ENCODE measurements at regions of chr7 and their contacts with region 1.

Region 1: GRCh38 chr7:30134611-30135545 is at the start of gene MTURN:
- DNase-seq: peak; percentile 92
- ATAC-seq: peak; percentile 83
- H3K4me3 ChIP-seq: peak within 1 kb of the TSS; percentile 63 to 95 (median 83)
- H3K4me3 Mint-ChIP-seq: peak within 1 kb of the TSS; percentile 98
- H3K27ac ChIP-seq: peak within 1 kb of the TSS in 1 of 2 donors; percentile 39
- H3K27ac Mint-ChIP-seq: peak within 1 kb of the TSS; percentile 93
- H3K4me1 ChIP-seq: peaks cover 0 to 18% of the 10 kb centered on the region in 2 donors
- H3K4me1 Mint-ChIP-seq: peaks cover 18% of the 10 kb centered on the region
- H3K27me3 ChIP-seq: peaks cover 0 to 3% (median 1%) of the 10 kb centered on the region in 4 experiments
- H3K27me3 Mint-ChIP-seq: peaks cover 11% of the 10 kb centered on the region
- CTCF ChIP-seq: no peak
- total RNA-seq, gene MTURN: 13.9 and 16.5 TPM in 2 replicates

Region 2: GRCh38 chr7:29494350-29494749 is 640.5 kb before region 1 on chr7:
- CTCF ChIA-PET with region 1: no interaction called
- POLR2A ChIA-PET with region 1: no interaction called
- intact Hi-C with region 1: no loop called
- DNase-seq: no peak
- ATAC-seq: no peak
- H3K4me3 ChIP-seq: no peak overlapping the region
- H3K4me3 Mint-ChIP-seq: no peak overlapping the region
- H3K27ac ChIP-seq: no peak overlapping the region
- H3K27ac Mint-ChIP-seq: no peak overlapping the region
- H3K4me1 ChIP-seq: no peaks in the 10 kb centered on the region
- H3K4me1 Mint-ChIP-seq: no peaks in the 10 kb centered on the region
- H3K27me3 ChIP-seq: no peaks in the 10 kb centered on the region
- H3K27me3 Mint-ChIP-seq: no peaks in the 10 kb centered on the region
- CTCF ChIP-seq: no peak

Region 3: GRCh38 chr7:30032310-30033130 is 102.4 kb before region 1 on chr7:
- CTCF ChIA-PET with region 1: no interaction called
- POLR2A ChIA-PET with region 1: no interaction called
- intact Hi-C with region 1: no loop called
- DNase-seq: no peak
- ATAC-seq: no peak
- H3K4me3 ChIP-seq: no peak overlapping the region
- H3K4me3 Mint-ChIP-seq: no peak overlapping the region
- H3K27ac ChIP-seq: no peak overlapping the region
- H3K27ac Mint-ChIP-seq: no peak overlapping the region
- H3K4me1 ChIP-seq: peaks cover 10 to 15% of the 10 kb centered on the region in 2 donors
- H3K4me1 Mint-ChIP-seq: peaks cover 6% of the 10 kb centered on the region
- H3K27me3 ChIP-seq: no peaks in the 10 kb centered on the region
- H3K27me3 Mint-ChIP-seq: no peaks in the 10 kb centered on the region
- CTCF ChIP-seq: no peak

Region 4: DNA sequence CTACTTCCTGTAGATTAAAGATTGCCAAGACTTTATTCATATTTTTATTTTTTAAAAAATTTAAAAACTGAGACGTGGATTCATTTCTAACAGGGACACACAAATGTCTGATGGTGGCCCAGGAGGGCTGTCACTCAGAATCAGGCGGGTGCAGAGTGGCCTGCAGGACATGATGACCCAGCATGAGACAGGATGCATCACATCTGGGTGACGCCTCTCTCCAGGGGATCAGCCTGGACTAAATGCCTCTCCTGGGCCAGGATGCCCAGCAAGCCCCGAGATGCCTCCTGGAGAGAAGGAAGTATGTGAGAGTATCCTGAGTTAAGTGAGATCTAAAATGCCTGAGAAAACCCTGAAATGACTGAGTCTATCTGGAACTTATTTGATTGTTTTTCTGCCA is 17.0 kb before region 1 on chr7:
- CTCF ChIA-PET with region 1: no interaction called
- POLR2A ChIA-PET with region 1: interaction called, 10 read pairs
- intact Hi-C with region 1: no loop called
- DNase-seq: no peak
- ATAC-seq: no peak
- H3K4me3 ChIP-seq: no peak overlapping the region
- H3K4me3 Mint-ChIP-seq: no peak overlapping the region
- H3K27ac ChIP-seq: no peak overlapping the region
- H3K27ac Mint-ChIP-seq: no peak overlapping the region
- H3K4me1 ChIP-seq: peaks cover 11 to 15% of the 10 kb centered on the region in 2 donors
- H3K4me1 Mint-ChIP-seq: peaks cover 18% of the 10 kb centered on the region
- H3K27me3 ChIP-seq: no peaks in the 10 kb centered on the region
- H3K27me3 Mint-ChIP-seq: no peaks in the 10 kb centered on the region
- CTCF ChIP-seq: no peak

Region 5: GRCh38 chr7:30178748-30179436 is 44.0 kb after region 1 on chr7:
- CTCF ChIA-PET with region 1: interaction called, 3 read pairs
- POLR2A ChIA-PET with region 1: no interaction called
- intact Hi-C with region 1: loop called (anchors 5 kb)
- DNase-seq: peak; percentile 72
- ATAC-seq: peak; percentile 90
- H3K4me3 ChIP-seq: peak overlapping the region in 3 of 5 experiments; percentile 9 to 37 (median 36)
- H3K4me3 Mint-ChIP-seq: peak overlapping the region; percentile 81
- H3K27ac ChIP-seq: peak overlapping the region; percentile 64 to 70
- H3K27ac Mint-ChIP-seq: peak overlapping the region; percentile 92
- H3K4me1 ChIP-seq: peaks cover 28 to 37% of the 10 kb centered on the region in 2 donors
- H3K4me1 Mint-ChIP-seq: peaks cover 44% of the 10 kb centered on the region
- H3K27me3 ChIP-seq: no peaks in the 10 kb centered on the region
- H3K27me3 Mint-ChIP-seq: no peaks in the 10 kb centered on the region
- CTCF ChIP-seq: no peak

Region 6: GRCh38 chr7:30284298-30285066 is 149.6 kb after region 1 on chr7 and contains the start of gene ZNRF2:
- CTCF ChIA-PET with region 1: no interaction called
- POLR2A ChIA-PET with region 1: no interaction called
- intact Hi-C with region 1: loop called (anchors 1 kb)
- DNase-seq: peak; percentile 99
- ATAC-seq: peak; percentile 80
- H3K4me3 ChIP-seq: peak within 1 kb of the TSS; percentile 46 to 91 (median 80)
- H3K4me3 Mint-ChIP-seq: peak within 1 kb of the TSS; percentile 88
- H3K27ac ChIP-seq: peak within 1 kb of the TSS; percentile 84 to 90
- H3K27ac Mint-ChIP-seq: peak within 1 kb of the TSS; percentile 96
- H3K4me1 ChIP-seq: peaks cover 19 to 30% of the 10 kb centered on the region in 2 donors
- H3K4me1 Mint-ChIP-seq: peaks cover 44% of the 10 kb centered on the region
- H3K27me3 ChIP-seq: no peaks in the 10 kb centered on the region
- H3K27me3 Mint-ChIP-seq: no peaks in the 10 kb centered on the region
- CTCF ChIP-seq: peak; percentile 41
- total RNA-seq, gene ZNRF2: 32.0 and 33.6 TPM in 2 replicates

Region 7: GRCh38 chr7:30445770-30446169 is 310.9 kb after region 1 on chr7:
- CTCF ChIA-PET with region 1: interaction called, 3 read pairs
- POLR2A ChIA-PET with region 1: no interaction called
- intact Hi-C with region 1: loop called (anchors 5 kb)
- DNase-seq: peak; percentile 91
- ATAC-seq: peak; percentile 100
- H3K4me3 ChIP-seq: no peak overlapping the region
- H3K4me3 Mint-ChIP-seq: no peak overlapping the region
- H3K27ac ChIP-seq: peak overlapping the region in 1 of 2 donors; percentile 64
- H3K27ac Mint-ChIP-seq: peak overlapping the region; percentile 75
- H3K4me1 ChIP-seq: peaks cover 12% of the 10 kb centered on the region in 2 donors
- H3K4me1 Mint-ChIP-seq: peaks cover 8% of the 10 kb centered on the region
- H3K27me3 ChIP-seq: no peaks in the 10 kb centered on the region
- H3K27me3 Mint-ChIP-seq: no peaks in the 10 kb centered on the region
- CTCF ChIP-seq: peak; percentile 71

Region 8: DNA sequence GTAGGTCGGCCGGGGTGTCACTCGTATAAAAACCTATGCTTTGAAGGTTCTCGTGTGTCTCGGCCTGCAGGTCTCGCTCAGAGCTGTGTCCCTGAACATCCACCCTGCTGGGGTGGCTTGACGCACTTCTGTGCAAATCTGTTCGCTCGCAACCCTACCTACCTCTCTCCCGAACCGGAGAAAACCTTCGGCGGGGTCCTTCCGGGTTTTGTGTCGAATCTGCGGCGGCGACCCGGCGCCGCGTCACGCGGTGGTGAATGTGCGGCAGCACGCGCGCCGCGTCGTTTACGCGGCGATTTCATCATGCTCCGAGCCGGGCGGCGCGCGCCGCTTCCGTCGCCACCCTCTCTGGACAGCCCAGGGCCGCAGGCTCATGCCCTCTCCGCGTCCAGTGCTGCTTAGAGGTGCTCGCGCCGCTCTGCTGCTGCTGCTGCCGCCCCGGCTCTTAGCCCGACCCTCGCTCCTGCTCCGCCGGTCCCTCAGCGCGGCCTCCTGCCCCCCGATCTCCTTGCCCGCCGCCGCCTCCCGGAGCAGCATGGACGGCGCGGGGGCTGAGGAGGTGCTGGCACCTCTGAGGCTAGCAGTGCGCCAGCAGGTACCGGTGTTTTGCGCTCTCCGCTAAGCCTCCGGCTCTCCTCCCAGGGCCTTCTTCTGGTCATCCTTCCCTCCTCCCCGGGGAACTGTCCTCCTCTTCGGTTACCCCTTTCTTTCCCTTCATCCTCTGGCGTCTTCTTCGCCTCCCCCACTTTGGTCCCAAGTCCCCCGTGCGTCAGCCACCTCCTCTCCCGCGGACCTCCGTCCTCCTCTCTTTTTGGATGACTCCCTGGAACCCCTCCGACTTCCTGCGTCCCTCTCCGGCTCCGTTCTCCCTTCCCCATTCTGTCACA is 459.9 kb after region 1 on chr7 and contains the start of gene GARS1:
- CTCF ChIA-PET with region 1: no interaction called
- POLR2A ChIA-PET with region 1: no interaction called
- intact Hi-C with region 1: loop called (anchors 10 kb)
- DNase-seq: peak; percentile 95
- ATAC-seq: peak; percentile 88
- H3K4me3 ChIP-seq: peak within 1 kb of the TSS; percentile 69 to 98 (median 93)
- H3K4me3 Mint-ChIP-seq: peak within 1 kb of the TSS; percentile 95
- H3K27ac ChIP-seq: peak within 1 kb of the TSS; percentile 89 to 98
- H3K27ac Mint-ChIP-seq: peak within 1 kb of the TSS; percentile 97
- H3K4me1 ChIP-seq: peaks cover 21 to 24% of the 10 kb centered on the region in 2 donors
- H3K4me1 Mint-ChIP-seq: peaks cover 57% of the 10 kb centered on the region
- H3K27me3 ChIP-seq: no peaks in the 10 kb centered on the region
- H3K27me3 Mint-ChIP-seq: no peaks in the 10 kb centered on the region
- CTCF ChIP-seq: no peak
- total RNA-seq, gene GARS1: 56.1 and 61.7 TPM in 2 replicates

Region 9: GRCh38 chr7:31443457-31443856 is 1308.6 kb after region 1 on chr7:
- CTCF ChIA-PET with region 1: no interaction called
- POLR2A ChIA-PET with region 1: no interaction called
- intact Hi-C with region 1: no loop called
- DNase-seq: peak; percentile 18
- ATAC-seq: no peak
- H3K4me3 ChIP-seq: no peak overlapping the region
- H3K4me3 Mint-ChIP-seq: no peak overlapping the region
- H3K27ac ChIP-seq: no peak overlapping the region
- H3K27ac Mint-ChIP-seq: no peak overlapping the region
- H3K4me1 ChIP-seq: no peaks in the 10 kb centered on the region
- H3K4me1 Mint-ChIP-seq: no peaks in the 10 kb centered on the region
- H3K27me3 ChIP-seq: no peaks in the 10 kb centered on the region
- H3K27me3 Mint-ChIP-seq: peaks cover 3% of the 10 kb centered on the region
- CTCF ChIP-seq: peak; percentile 75